Mucosa of descending colon (tissue), 3 donors: ENCODE measurements at regions of chr3 and their contacts with region 1.

Region 1: GRCh38 chr3:126995926-126996512 is 13.1 kb downstream of the PLXNA1 start:
- DNase-seq: no peak
- ATAC-seq: no peak
- H3K4me3 ChIP-seq: no peak overlapping the region
- H3K4me1 ChIP-seq: peaks cover 7% of the 10 kb centered on the region
- CTCF ChIP-seq: no peak

Region 2: DNA sequence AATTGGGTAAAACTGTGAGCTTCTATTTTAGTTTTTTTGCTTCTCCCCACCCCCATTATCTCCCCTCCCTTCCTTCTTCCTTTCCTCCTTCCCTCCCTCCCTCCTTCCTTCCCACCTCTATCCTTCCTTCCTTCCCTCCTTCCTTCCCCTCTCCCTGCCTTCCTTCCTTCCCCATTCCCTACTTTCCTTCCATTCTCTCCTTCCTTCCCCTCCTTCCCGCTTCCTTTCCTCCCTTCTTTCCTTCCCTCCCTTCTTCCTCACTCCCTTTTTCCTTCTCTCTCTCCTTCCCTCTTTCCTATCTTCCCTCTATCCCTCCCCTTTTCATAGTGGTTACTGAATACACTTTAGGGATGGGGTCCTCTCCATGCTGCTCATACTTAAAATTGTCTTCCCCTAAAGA is 396.9 kb before region 1 on chr3:
- intact Hi-C with region 1: no loop called
- DNase-seq: no peak
- ATAC-seq: no peak
- H3K4me3 ChIP-seq: no peak overlapping the region
- H3K4me1 ChIP-seq: no peaks in the 10 kb centered on the region
- CTCF ChIP-seq: no peak

Region 3: DNA sequence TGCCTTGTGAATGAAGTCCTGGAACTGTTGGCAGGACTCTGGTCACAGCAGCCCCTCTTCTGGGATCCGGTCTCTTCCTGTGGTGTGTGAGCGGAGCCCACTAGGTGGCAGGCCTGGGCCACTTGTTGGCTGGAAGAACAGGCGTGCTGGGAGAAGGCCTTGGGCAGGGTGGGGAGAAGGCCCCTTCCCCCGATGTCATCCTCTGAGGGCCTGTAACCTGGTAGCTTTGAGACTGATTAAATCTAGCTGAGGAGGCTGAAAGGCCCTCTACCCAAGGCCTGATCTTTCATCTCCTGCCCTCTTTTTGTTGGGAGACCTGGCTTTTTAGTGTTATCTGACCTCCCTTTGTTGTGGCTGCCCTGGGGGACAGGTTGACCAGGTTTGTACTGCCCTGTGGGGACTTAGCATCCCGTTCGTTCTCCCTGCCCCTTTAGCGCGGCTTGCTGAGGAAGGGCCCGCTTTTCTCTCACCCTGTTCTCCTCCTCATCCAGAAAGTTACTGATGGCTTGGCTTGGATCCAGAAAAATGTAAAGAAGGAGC is 243.6 kb before region 1 on chr3:
- intact Hi-C with region 1: loop called in 1 of 2 experiments (anchors 10 kb)
- DNase-seq: peak; percentile 61 to 86 (median 83)
- ATAC-seq: peak; percentile 85
- H3K4me3 ChIP-seq: no peak overlapping the region
- H3K4me1 ChIP-seq: no peaks in the 10 kb centered on the region
- CTCF ChIP-seq: peak; percentile 66